ENCODE measurements at regions of chr9 and their contacts with region 1.

Region 1: GRCh38 chr9:72658703-72659102 is 137.3 kb downstream of the TMC1 start:
- DNase-seq: no peak
- ATAC-seq: no peak
- H3K4me3 ChIP-seq: no peak overlapping the region
- H3K4me3 Mint-ChIP-seq: no peak overlapping the region
- H3K27ac ChIP-seq: no peak overlapping the region
- H3K27ac Mint-ChIP-seq: no peak overlapping the region
- H3K4me1 ChIP-seq: no peaks in the 10 kb centered on the region
- H3K4me1 Mint-ChIP-seq: no peaks in the 10 kb centered on the region
- H3K27me3 ChIP-seq: no peaks in the 10 kb centered on the region
- H3K27me3 Mint-ChIP-seq: peaks cover 0 to 26% (median 15%) of the 10 kb centered on the region in 5 donors

Region 2: DNA sequence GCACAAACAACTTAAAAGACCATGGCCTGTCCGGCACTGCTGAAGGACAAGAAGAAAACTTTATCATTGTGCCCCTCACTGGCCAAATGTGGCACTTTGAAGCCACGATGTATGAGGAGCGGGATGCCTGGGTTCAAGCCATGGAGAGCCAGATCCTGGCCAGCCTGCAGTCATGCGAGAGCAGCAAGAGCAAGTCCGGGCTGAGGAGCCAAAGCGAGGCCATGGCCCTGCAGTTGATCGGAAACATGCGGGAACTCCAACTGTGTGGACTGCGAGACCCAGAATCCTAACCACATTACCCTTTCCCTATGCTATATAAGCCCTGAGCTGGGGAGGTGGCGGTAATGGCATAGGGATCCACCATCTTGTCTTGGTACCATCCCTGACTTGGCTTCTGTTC is 990.8 kb after region 1 on chr9:
- CTCF ChIA-PET with region 1: no interaction called
- POLR2A ChIA-PET with region 1: interaction called, 10 read pairs
- intact Hi-C with region 1: no loop called
- DNase-seq: no peak
- ATAC-seq: no peak
- H3K4me3 ChIP-seq: no peak overlapping the region
- H3K4me3 Mint-ChIP-seq: no peak overlapping the region
- H3K27ac ChIP-seq: no peak overlapping the region
- H3K27ac Mint-ChIP-seq: no peak overlapping the region
- H3K4me1 ChIP-seq: no peaks in the 10 kb centered on the region
- H3K4me1 Mint-ChIP-seq: no peaks in the 10 kb centered on the region
- H3K27me3 ChIP-seq: no peaks in the 10 kb centered on the region
- H3K27me3 Mint-ChIP-seq: no peaks in the 10 kb centered on the region

Measured in naive thymus-derived CD4-positive, alpha-beta T cell (primary cell).